Activated CD8-positive, alpha-beta T cell treated with anti-CD3 and anti-CD28 coated beads, Interleukin-2, amount 10 ng/mL, durations not matched to agents 7 days and 5 days (primary cell): ENCODE measurements at regions of chr1 and their contacts with region 1.

Region 1: DNA sequence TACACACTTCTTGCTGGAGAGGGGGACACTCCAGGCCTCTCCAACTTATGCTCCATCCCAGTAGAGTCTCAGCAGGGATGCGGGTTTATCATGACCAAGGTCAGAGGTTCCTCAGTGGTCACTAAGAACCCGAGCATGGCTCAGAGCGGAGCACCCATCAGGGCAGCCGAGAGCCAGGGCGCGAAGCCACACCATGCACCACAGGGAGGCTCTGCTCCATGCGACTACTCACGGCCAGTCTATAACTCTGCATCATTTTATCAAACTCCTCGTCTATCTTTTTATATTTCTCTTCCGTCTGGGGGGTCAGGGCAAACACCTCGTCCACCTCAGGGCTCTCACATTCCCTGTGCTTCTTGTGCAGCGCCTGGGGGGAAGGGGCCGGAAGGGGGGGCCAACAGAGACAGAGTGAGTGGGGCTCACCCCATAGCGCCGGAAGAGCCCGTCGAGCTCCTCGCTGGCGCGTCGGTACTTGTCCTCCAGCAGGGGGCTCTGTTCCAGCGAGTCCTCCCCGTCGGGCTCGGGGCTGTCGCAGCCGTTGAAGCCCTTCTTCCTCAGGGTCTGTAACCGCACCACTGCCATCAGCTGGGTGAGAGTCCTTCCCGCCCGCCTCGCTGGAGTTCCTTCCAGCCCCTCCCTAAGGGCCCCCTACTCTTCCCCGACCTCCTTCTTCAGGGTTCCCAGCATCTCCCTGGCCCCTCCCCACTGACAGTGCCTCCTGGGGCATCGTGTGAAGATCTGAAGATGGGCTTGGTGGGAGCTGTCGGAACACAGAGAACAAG is 20.0 kb downstream of the MEF2D start:
- DNase-seq: peak; percentile 87
- ATAC-seq: peak; percentile 90
- H3K4me3 Mint-ChIP-seq: no peak overlapping the region
- H3K27ac Mint-ChIP-seq: peak overlapping the region; percentile 71
- H3K4me1 Mint-ChIP-seq: peaks cover 59% of the 10 kb centered on the region
- H3K27me3 Mint-ChIP-seq: no peaks in the 10 kb centered on the region

Region 2: GRCh38 chr1:156020292-156021089 is 460.1 kb before region 1 on chr1 and contains the start of gene SSR2:
- CTCF ChIA-PET with region 1: no interaction called
- POLR2A ChIA-PET with region 1: no interaction called
- DNase-seq: peak; percentile 93
- ATAC-seq: peak; percentile 99
- H3K4me3 Mint-ChIP-seq: peak within 1 kb of the TSS; percentile 98
- H3K27ac Mint-ChIP-seq: peak within 1 kb of the TSS; percentile 99
- H3K4me1 Mint-ChIP-seq: peaks cover 32% of the 10 kb centered on the region
- H3K27me3 Mint-ChIP-seq: peaks cover 9% of the 10 kb centered on the region
- total RNA-seq, gene SSR2: 216 to 233 TPM

Region 3: GRCh38 chr1:156401681-156402081 is 78.9 kb before region 1 on chr1:
- CTCF ChIA-PET with region 1: no interaction called
- POLR2A ChIA-PET with region 1: no interaction called
- DNase-seq: no peak
- ATAC-seq: no peak
- H3K4me3 Mint-ChIP-seq: no peak overlapping the region
- H3K27ac Mint-ChIP-seq: no peak overlapping the region
- H3K4me1 Mint-ChIP-seq: no peaks in the 10 kb centered on the region
- H3K27me3 Mint-ChIP-seq: peaks cover 7% of the 10 kb centered on the region

Region 4: DNA sequence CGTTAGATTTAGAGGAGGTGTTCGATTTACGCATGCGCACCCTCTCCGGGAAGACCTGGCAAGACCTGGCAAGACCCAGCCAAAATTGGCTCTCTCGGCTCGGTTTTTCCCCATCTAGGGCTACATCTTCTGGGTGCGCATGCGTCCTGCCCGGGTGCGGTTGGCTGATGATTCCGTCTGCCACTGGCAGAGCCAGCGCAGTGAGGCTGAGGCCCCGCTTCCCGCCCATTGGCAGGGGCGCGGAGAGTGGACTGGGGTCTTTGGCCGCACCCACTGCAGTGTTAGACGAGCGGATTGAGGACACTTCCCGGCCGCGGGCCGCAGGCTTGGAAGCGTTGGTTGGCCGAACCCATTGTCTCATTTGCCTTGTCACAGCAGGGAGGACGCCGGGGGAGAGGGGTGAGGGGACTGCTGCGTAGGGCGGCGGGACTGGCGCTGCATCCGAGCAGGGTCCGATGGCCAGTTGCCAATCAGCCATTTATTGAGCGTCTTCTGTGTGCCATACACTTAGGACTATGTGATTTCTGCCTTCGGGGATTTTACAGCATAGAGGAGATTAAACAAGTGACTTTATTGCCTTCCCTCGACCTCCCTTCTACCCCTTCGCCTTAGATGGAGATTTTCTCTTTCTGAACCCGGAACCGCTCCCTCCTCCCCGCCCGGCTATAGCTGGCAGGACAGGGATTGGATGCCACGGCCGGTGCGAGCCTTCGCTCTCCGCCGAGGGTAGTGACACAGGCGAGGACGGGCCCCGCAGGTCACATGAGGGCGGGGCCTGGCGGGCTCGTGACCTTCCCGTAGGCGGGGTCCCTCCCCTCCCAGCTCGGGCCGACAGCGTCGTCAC is 23.8 kb before region 1 on chr1:
- CTCF ChIA-PET with region 1: interaction called, 20 read pairs
- POLR2A ChIA-PET with region 1: no interaction called
- DNase-seq: peak; percentile 97
- ATAC-seq: peak; percentile 88
- H3K4me3 Mint-ChIP-seq: peak overlapping the region; percentile 84
- H3K27ac Mint-ChIP-seq: peak overlapping the region; percentile 95
- H3K4me1 Mint-ChIP-seq: peaks cover 18% of the 10 kb centered on the region
- H3K27me3 Mint-ChIP-seq: peaks cover 15% of the 10 kb centered on the region

Region 5: GRCh38 chr1:156500797-156501499 is 20.3 kb after region 1 on chr1:
- CTCF ChIA-PET with region 1: interaction called, 207 read pairs
- POLR2A ChIA-PET with region 1: interaction called, 143 read pairs
- DNase-seq: peak; percentile 95
- ATAC-seq: peak; percentile 73
- H3K4me3 Mint-ChIP-seq: peak overlapping the region; percentile 87
- H3K27ac Mint-ChIP-seq: peak overlapping the region; percentile 99
- H3K4me1 Mint-ChIP-seq: peaks cover 76% of the 10 kb centered on the region
- H3K27me3 Mint-ChIP-seq: no peaks in the 10 kb centered on the region

Region 6: DNA sequence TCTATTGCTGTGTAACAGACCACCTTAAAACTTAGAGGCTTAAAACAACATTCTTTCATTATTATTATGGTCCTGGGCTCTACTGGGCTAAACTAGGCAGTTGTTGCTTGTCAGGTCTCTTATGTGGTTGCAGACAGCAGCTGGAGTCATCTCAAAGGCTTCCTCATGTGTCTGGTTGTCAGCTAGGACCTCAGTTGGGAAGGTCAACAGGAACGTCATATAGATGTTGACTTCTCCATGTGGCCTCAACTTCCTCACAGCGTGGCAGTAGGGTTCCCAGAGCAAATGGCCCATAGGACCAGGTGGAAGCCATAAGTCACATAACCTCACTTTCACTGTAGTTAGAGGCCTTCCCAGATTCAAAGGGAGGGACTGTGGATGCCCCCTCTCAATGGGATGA is 35.4 kb after region 1 on chr1:
- CTCF ChIA-PET with region 1: interaction called, 15 read pairs
- POLR2A ChIA-PET with region 1: no interaction called
- DNase-seq: no peak
- ATAC-seq: no peak
- H3K4me3 Mint-ChIP-seq: no peak overlapping the region
- H3K27ac Mint-ChIP-seq: no peak overlapping the region
- H3K4me1 Mint-ChIP-seq: peaks cover 8% of the 10 kb centered on the region
- H3K27me3 Mint-ChIP-seq: peaks cover 3% of the 10 kb centered on the region

Region 7: GRCh38 chr1:156571949-156572662 is 91.5 kb after region 1 on chr1 and contains the start of gene IQGAP3:
- CTCF ChIA-PET with region 1: interaction called, 21 read pairs
- POLR2A ChIA-PET with region 1: no interaction called
- DNase-seq: peak; percentile 86
- ATAC-seq: peak; percentile 96
- H3K4me3 Mint-ChIP-seq: peak within 1 kb of the TSS; percentile 97
- H3K27ac Mint-ChIP-seq: peak within 1 kb of the TSS; percentile 80
- H3K4me1 Mint-ChIP-seq: peaks cover 23% of the 10 kb centered on the region
- H3K27me3 Mint-ChIP-seq: peaks cover 11% of the 10 kb centered on the region
- total RNA-seq, gene IQGAP3: 28.6 to 31.0 TPM

Region 8: DNA sequence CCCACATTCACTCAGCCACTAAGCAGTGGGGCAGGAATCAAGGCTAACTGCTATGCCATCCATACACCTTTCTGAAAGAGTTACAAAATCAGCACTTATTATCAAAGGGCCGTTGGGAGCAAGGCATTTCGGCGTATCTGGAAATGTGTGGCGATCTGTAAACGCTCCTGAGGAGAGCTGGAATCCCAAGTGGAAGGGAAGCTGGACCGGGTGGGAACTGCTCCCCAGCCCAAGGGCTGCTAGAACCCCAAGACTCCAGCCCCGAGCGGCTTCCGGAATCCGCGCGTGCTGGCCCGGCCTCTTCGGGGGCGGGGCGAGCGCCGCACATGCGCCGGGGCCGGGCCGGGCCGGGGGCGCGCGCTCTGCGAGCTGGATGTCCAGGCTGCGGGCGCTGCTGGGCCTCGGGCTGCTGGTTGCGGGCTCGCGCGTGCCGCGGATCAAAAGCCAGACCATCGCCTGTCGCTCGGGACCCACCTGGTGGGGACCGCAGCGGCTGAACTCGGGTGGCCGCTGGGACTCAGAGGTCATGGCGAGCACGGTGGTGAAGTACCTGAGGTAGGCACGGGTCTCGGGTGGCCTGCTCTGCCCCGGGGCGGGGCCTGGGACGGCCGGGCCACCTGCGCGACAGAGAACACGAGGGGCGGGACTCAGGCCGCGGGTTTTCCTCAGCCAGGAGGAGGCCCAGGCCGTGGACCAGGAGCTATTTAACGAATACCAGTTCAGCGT is 111.0 kb after region 1 on chr1 and contains the start of gene NAXE:
- CTCF ChIA-PET with region 1: interaction called, 21 read pairs
- POLR2A ChIA-PET with region 1: interaction called, 5 read pairs
- DNase-seq: peak; percentile 74
- ATAC-seq: peak; percentile 96
- H3K4me3 Mint-ChIP-seq: peak within 1 kb of the TSS; percentile 82
- H3K27ac Mint-ChIP-seq: peak within 1 kb of the TSS; percentile 87
- H3K4me1 Mint-ChIP-seq: peaks cover 24% of the 10 kb centered on the region
- H3K27me3 Mint-ChIP-seq: no peaks in the 10 kb centered on the region
- total RNA-seq, gene NAXE: 54.3 to 60.3 TPM

Region 9: DNA sequence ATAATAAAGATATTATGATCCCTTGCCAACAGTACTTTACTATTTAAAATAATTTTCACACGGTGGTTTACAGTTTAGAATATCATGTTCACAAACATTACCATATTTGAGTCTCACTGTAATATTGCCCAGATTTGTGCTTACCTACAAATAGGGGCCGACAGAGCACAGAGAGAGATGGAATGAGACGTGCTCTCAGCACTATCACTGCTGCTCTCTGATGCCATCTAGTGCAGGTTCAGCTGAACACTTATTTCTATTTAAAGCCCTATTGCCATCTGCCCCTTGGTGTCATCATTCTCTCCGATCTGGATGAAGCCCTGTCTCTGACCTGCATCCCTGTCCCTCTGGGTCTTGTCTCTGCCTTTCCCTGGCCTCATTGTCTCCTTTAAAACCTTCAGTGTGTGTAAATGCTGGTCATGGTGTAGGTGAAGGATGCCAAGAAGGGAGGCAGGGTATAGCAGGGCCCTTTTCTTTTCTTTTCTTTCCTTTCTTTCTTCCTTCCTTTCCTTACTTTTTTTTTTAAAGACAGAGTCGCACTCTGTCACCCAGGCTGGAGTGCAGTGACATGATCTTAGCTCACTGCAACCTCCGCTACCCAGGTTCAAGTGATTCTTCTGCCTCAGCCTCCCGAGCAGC is 127.6 kb after region 1 on chr1:
- CTCF ChIA-PET with region 1: interaction called, 40 read pairs
- POLR2A ChIA-PET with region 1: no interaction called
- DNase-seq: peak; percentile 83
- ATAC-seq: peak; percentile 96
- H3K4me3 Mint-ChIP-seq: no peak overlapping the region
- H3K27ac Mint-ChIP-seq: no peak overlapping the region
- H3K4me1 Mint-ChIP-seq: peaks cover 15% of the 10 kb centered on the region
- H3K27me3 Mint-ChIP-seq: peaks cover 16% of the 10 kb centered on the region